HepG2 (cell line): ENCODE measurements at regions of chr4 and their contacts with region 1.

Region 1: DNA sequence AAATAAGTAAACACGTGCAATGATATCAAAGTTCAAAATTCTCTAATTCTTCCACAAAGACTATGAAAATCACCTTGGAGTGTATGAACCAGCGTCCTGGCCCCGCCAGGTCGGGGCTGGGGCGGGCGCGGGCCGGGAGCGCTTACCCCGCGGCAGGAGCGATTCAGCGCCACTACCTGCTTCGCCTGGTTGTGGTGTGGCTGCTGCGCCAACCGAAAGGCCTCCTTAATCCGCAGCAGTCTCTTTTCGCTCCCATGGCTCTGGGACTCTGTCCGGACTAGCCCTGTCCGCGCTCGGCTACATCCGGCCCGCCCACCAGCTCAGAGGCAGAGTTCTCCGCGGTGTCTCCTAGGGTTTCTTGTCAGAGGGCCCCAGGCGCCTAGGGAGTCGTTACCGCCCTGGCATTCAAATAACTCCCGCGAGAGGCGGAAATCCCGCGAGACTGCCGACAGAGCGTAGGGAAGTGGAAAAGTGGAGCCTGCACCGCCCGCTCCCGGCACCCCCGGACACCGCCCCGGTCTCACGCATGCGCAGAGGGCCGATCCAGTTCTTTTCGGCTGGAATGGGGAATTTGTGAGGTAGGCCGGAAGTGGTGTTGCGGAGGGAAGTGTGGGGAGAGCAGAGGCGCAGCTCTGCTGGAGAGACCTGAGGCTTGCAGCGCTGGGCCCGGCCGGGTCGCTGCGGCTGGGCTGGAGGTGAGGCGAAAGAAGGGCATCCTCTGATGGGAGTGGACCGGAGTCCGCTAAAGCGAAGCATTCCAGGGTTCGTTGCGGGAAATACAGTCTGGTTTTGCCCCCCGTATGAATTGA is at the start of gene FAM200B:
- DNase-seq: peak; percentile 97
- ATAC-seq: peak; percentile 95
- H3K4me3 ChIP-seq: peak within 1 kb of the TSS; percentile 83 to 92 (median 90)
- H3K27ac ChIP-seq: peak within 1 kb of the TSS; percentile 94
- H3K4me1 ChIP-seq: peaks cover 65% of the 10 kb centered on the region
- H3K27me3 ChIP-seq: no peaks in the 10 kb centered on the region; a peak in 1 of 5 replicates
- CTCF ChIP-seq: peak; percentile 7; the same call in 1 of the 2 replicates
- EP300 ChIP-seq: peak in 1 of 2 experiments; percentile 48; a peak in 1 of 4 replicates
- POLR2A ChIP-seq: peak; percentile 86 to 88
- RAD21 ChIP-seq: peak; percentile 51
- total RNA-seq, gene FAM200B: 41.8 and 48.4 TPM in 2 replicates

Region 2: GRCh38 chr4:15655229-15656037 is 26.0 kb before region 1 on chr4 and contains the start of gene FBXL5:
- CTCF ChIA-PET with region 1: no interaction called
- POLR2A ChIA-PET with region 1: interaction called, 36 read pairs
- in situ Hi-C with region 1: no loop called
- intact Hi-C with region 1: loop called (anchors 1 kb)
- DNase-seq: peak; percentile 56
- ATAC-seq: peak; percentile 76
- H3K4me3 ChIP-seq: peak within 1 kb of the TSS; percentile 71 to 98 (median 90)
- H3K27ac ChIP-seq: peak within 1 kb of the TSS; percentile 85
- H3K4me1 ChIP-seq: peaks cover 45% of the 10 kb centered on the region
- H3K27me3 ChIP-seq: no peaks in the 10 kb centered on the region; a peak in 1 of 5 replicates
- CTCF ChIP-seq: peak; percentile 23; the same call in 1 of the 2 replicates
- EP300 ChIP-seq: no peak
- POLR2A ChIP-seq: peak; percentile 73 to 91
- RAD21 ChIP-seq: no peak; the same call in 1 of the 2 replicates
- total RNA-seq, gene FBXL5: 45.3 and 53.4 TPM in 2 replicates

Region 3: DNA sequence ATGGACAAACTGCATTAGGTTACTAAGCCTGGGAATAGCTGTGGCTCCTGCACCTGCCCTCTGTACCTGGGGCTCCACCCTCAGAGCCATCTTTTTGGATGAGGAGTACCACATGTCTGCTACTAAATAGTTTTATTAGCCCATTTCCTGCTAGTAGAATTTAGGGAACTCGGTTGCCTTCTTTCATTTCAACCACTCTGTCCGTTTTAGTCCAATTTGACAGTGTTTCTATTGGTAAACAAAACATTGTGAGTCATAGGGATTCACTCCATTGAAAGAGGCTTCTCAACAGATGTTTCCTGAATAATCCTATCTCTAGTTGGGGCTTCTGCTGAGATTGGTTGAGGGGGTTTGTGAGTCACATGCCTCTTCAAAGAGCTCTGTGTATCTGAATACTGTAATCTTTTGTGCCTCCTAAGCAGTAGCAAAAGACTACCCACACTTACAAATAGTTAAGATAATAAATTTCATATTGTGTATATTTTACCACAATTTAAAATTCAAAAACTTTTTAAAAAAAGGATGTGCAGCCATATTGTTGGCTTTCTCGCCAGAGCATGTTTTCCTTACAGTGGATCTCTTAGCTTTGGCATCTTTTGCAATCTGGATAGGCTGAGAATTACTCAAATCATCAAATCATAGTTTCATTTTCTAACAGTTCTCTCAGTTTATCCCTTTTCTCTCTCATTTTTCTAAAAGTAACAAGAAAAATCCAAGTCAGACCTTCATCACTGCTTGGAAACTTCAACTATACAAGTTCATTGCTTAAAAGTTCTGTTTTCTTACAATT is 10.1 kb after region 1 on chr4:
- CTCF ChIA-PET with region 1: no interaction called
- POLR2A ChIA-PET with region 1: interaction called, 10 read pairs
- in situ Hi-C with region 1: no loop called
- intact Hi-C with region 1: no loop called
- DNase-seq: peak; percentile 14
- ATAC-seq: peak; percentile 49; the same call in 2 of the 3 replicates
- H3K4me3 ChIP-seq: no peak overlapping the region
- H3K27ac ChIP-seq: no peak overlapping the region
- H3K4me1 ChIP-seq: no peaks in the 10 kb centered on the region
- H3K27me3 ChIP-seq: no peaks in the 10 kb centered on the region
- CTCF ChIP-seq: no peak
- EP300 ChIP-seq: no peak
- POLR2A ChIP-seq: no peak
- RAD21 ChIP-seq: no peak

Region 4: DNA sequence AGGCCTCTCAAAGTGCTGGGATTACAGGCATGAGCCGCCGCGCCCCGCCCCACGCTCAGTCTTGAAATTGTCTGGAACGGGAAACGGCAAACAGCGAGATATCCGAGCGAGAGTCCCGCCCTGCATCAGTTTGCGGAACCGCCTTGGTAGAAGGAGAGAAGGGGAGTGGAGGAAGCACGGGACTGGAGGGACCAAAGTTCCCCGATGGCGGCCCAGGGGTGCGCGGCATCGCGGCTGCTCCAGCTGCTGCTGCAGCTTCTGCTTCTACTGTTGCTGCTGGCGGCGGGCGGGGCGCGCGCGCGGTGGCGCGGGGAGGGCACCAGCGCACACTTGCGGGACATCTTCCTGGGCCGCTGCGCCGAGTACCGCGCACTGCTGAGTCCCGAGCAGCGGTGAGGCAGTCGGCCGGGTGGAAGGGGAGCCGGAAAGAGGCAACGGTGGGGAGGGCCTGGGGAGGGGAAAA is 21.6 kb after region 1 on chr4 and contains the start of gene BST1:
- CTCF ChIA-PET with region 1: no interaction called
- POLR2A ChIA-PET with region 1: interaction called, 24 read pairs
- in situ Hi-C with region 1: no loop called
- intact Hi-C with region 1: loop called (anchors 1 kb)
- DNase-seq: no peak
- ATAC-seq: no peak
- H3K4me3 ChIP-seq: no peak within 1 kb of the TSS
- H3K27ac ChIP-seq: no peak within 1 kb of the TSS
- H3K4me1 ChIP-seq: peaks cover 56% of the 10 kb centered on the region
- H3K27me3 ChIP-seq: no peaks in the 10 kb centered on the region
- CTCF ChIP-seq: no peak
- EP300 ChIP-seq: no peak
- POLR2A ChIP-seq: no peak
- RAD21 ChIP-seq: no peak
- total RNA-seq, gene BST1: 0.22 and 0.49 TPM in 2 replicates

Region 5: DNA sequence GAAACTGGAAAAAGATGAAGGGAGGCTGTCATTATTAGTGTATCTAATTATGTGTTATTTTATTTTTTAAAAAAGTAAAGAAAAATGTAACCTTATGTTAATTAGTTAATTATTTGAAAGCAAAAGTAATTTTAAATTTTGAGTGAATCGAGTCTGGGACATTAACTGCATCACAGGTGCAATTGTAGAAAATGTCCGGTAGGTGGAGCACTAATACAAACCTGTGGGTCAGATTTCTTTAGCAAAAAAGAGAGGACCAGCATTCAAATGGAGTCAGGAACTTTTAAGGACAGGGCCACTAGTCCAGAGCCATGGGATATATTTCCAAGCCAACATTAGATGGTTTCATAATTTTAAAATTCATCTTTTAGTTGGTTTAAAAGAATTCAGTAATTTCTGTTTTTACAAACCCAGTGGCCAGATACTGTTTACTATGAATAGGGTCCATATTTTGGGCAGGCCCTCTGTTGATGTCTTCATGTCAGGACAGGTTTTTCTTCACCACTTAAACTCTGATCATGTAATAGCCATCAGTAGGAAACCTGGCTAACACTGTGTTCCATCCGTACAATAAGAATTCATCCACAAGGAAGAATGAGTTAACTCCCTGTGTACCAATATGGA is 48.6 kb after region 1 on chr4:
- CTCF ChIA-PET with region 1: no interaction called
- POLR2A ChIA-PET with region 1: no interaction called
- in situ Hi-C with region 1: no loop called
- intact Hi-C with region 1: loop called (anchors 5 kb)
- DNase-seq: peak; percentile 45
- ATAC-seq: peak; percentile 61
- H3K4me3 ChIP-seq: no peak overlapping the region
- H3K27ac ChIP-seq: no peak overlapping the region
- H3K4me1 ChIP-seq: no peaks in the 10 kb centered on the region
- H3K27me3 ChIP-seq: peaks cover 0 to 4% of the 10 kb centered on the region in 2 experiments; a peak in 1 of 5 replicates
- CTCF ChIP-seq: peak; percentile 70
- EP300 ChIP-seq: no peak
- POLR2A ChIP-seq: no peak
- RAD21 ChIP-seq: peak; percentile 24; the same call in 1 of the 2 replicates

Region 6: GRCh38 chr4:16225863-16226815 is 544.7 kb after region 1 on chr4 and contains the start of gene TAPT1:
- CTCF ChIA-PET with region 1: no interaction called
- POLR2A ChIA-PET with region 1: interaction called, 4 read pairs
- in situ Hi-C with region 1: no loop called
- intact Hi-C with region 1: loop called (anchors 10 kb)
- DNase-seq: no peak
- ATAC-seq: peak; percentile 50
- H3K4me3 ChIP-seq: peak within 1 kb of the TSS; percentile 83 to 96 (median 94)
- H3K27ac ChIP-seq: peak within 1 kb of the TSS; percentile 90
- H3K4me1 ChIP-seq: peaks cover 51% of the 10 kb centered on the region
- H3K27me3 ChIP-seq: no peaks in the 10 kb centered on the region; a peak in 1 of 5 replicates
- CTCF ChIP-seq: no peak
- EP300 ChIP-seq: no peak
- POLR2A ChIP-seq: peak in 1 of 2 experiments; percentile 54; a peak in 1 of 4 replicates
- RAD21 ChIP-seq: 0 out of 2 replicates have a peak, but pooled peaks have one; percentile 13
- total RNA-seq, gene TAPT1: 16.3 and 24.5 TPM in 2 replicates